Esophagus muscularis mucosa (tissue), 4 donors: ENCODE measurements at regions of chr12 and their contacts with region 1.

Region 1: DNA sequence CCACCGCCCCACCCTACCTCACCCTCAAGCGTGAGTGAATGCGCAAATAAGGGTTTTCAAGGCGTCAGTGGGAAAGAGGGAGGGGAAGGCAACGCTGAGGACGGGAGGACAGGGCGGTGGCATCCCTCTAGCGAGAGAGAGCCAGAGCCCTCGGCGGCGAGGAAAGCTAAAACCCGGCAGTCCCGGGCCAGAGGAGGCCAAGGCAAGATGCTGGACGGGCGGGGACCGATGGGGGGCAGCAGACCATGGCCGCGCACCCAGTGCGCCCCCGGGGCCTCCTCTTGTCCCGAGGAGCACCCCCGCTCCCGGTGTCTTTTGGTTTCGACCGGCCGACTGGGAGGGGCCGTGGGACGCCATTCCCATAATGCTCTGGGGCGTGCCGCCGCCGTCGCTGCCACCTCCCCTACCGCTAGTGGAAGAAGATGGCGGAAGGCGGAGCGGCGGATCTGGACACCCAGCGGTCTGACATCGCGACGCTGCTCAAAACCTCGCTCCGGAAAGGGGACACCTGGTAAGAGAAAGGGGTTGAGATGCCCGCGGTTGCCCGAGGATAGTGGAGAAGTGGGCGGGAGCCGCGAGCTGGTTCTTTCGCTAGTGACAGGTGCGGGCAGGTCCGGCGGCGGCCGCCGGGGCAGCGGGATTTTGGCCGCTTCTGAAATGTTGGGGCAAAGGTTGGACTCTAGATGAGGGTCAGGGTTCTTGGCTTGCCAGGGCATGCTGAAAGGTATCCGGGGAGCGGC is at the start of gene USP15:
- DNase-seq: peak; percentile 98
- H3K4me3 ChIP-seq: peak within 1 kb of the TSS; percentile 89 to 90 (median 90)
- H3K27ac ChIP-seq: peak within 1 kb of the TSS; percentile 87 to 95 (median 90)
- H3K4me1 ChIP-seq: peaks cover 27 to 60% (median 45%) of the 10 kb centered on the region in 4 donors
- H3K27me3 ChIP-seq: no peaks in the 10 kb centered on the region
- CTCF ChIP-seq: peak; percentile 38 to 65 (median 53)
- EP300 ChIP-seq: no peak
- POLR2A ChIP-seq: peak; percentile 22
- total RNA-seq, gene USP15: 38.0 to 78.5 (median 49.9) TPM

Region 2: DNA sequence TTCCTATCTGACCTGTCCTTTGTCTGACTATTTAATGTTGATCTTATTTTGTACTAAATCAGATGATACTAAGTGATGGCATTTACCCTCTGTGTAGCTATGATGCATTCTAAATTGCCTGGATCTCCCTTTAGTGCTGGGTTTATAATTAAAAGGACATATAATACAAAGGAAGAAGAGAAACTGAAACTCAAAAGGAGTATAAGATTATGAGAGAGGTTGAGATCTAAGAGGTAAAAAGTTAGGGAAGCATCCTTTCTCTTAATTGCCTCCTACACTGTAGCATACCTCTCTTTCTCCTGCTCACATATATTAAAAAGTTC is 119.5 kb after region 1 on chr12:
- intact Hi-C with region 1: loop called (anchors 10 kb)
- DNase-seq: no peak
- H3K4me3 ChIP-seq: no peak overlapping the region
- H3K27ac ChIP-seq: no peak overlapping the region
- H3K4me1 ChIP-seq: no peaks in the 10 kb centered on the region
- H3K27me3 ChIP-seq: no peaks in the 10 kb centered on the region
- CTCF ChIP-seq: no peak
- EP300 ChIP-seq: no peak
- POLR2A ChIP-seq: no peak

Region 3: DNA sequence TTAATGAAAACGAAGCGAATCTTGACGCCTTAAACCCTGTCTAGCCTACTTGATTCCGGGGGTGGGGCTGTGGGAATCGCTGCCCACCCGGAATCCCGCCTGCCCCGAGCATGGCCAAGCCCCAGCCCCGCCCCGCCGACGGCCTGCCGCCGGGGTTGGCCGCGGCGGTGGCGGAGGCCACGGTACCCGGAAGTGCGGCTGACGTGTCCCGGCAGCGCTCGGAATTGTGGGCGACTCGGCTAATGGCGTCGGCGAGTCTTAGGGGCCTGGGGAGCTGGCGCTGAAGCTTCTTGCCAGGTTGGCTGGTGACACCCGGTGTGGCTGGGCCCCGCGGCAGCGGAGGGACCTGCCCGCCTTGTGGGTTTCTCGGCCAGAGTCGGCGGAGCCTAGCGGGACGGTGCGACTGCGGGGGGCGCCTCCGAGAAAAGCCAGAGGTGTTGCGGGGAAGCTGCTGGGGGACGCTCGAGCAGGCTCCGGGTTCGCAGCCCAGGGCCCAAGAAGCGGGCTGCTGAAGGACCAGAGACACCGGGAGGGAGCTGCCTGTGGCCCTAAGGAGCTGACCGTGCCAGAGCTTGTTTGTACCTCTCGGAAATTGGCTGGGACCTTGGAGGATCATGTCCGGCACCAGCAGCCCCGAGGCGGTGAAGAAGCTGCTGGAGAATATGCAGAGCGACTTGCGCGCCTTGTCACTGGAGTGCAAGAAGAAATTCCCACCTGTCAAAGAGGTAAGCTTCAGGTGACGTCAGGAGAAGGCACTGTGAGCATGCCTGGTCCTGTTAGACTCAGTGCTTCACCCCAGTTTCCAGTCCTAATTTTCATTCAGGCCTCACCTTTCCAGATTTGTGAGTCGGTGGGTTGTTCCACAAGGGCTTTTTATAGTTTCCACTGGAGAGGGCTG is 206.7 kb after region 1 on chr12 and contains the start of gene MON2:
- intact Hi-C with region 1: loop called (anchors 5 kb)
- DNase-seq: peak; percentile 96
- H3K4me3 ChIP-seq: peak within 1 kb of the TSS; percentile 83 to 87 (median 84)
- H3K27ac ChIP-seq: peak within 1 kb of the TSS; percentile 85 to 94 (median 92)
- H3K4me1 ChIP-seq: peaks cover 31 to 43% (median 37%) of the 10 kb centered on the region in 4 donors
- H3K27me3 ChIP-seq: no peaks in the 10 kb centered on the region
- CTCF ChIP-seq: peak in 1 of 3 experiments; percentile 9
- EP300 ChIP-seq: no peak
- POLR2A ChIP-seq: no peak
- total RNA-seq, gene MON2: 21.5 to 47.3 (median 30.8) TPM